ENCODE measurements at regions of chr1 and their contacts with region 1.

Region 1: GRCh38 chr1:43706598-43707495 is 489 bp upstream of the ST3GAL3 start:
- DNase-seq: peak; percentile 95 to 97
- ATAC-seq: peak; percentile 98
- H3K4me3 ChIP-seq: peak overlapping the region; percentile 5 to 80
- H3K27ac ChIP-seq: no peak overlapping the region
- H3K4me1 ChIP-seq: no peaks in the 10 kb centered on the region
- H3K27me3 ChIP-seq: no peaks in the 10 kb centered on the region

Region 2: GRCh38 chr1:43650310-43651085 is 56.3 kb before region 1 on chr1:
- intact Hi-C with region 1: loop called in 1 of 2 experiments (anchors 2 kb)
- DNase-seq: peak; percentile 96 to 97
- ATAC-seq: peak; percentile 94
- H3K4me3 ChIP-seq: peak overlapping the region; percentile 77 to 95
- H3K27ac ChIP-seq: peak overlapping the region in 1 of 2 donors; percentile 73
- H3K4me1 ChIP-seq: peaks cover 4 to 7% of the 10 kb centered on the region in 2 donors
- H3K27me3 ChIP-seq: peaks cover 0 to 1% of the 10 kb centered on the region in 2 donors

Measured in aorta (tissue), 5 donors.